ENCODE measurements at regions of chr15 and their contacts with region 1.

Region 1: DNA sequence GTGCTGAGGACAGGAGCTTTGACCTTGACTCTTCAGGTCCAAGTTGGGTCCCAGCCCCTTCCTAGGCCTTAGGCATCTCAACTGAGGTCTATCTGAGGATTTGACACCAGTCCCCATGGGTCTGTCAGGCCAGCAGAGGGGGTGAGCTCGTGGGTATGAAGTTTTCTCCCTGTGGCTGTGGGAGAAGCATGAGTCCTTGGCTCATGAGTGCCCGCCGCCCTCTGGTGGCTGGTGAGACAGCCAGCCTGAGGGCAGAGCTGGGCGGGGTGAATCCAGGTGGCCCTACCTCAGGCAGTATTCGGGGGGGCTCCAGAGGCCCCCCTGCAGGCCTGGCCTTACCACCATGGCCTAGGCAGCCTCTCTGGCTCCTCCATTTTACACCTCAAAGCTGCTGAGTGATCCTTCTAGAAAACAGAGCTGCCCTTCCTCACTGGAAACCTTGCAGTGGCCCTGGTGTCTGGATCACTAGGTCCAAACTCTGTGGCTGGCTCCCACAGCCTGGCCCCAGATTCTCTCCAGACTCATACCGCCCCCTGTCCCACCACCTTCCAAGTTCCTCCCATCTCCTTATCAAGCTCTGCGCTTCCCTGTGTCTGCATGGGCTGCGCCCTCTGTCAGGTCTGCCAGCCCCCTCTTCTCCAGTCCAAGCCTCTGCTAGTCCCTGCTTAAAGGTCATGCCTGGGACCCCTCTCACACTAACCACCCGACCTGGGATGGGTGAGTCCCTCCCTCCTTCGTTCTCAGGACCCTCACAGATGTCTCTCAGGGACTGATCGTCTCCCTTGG is 16.1 kb downstream of the SH2D7 start:
- DNase-seq: peak; percentile 77 to 93
- ATAC-seq: peak; percentile 72 to 81 (median 76)
- H3K4me3 ChIP-seq: no peak overlapping the region
- H3K4me3 Mint-ChIP-seq: no peak overlapping the region
- H3K27ac ChIP-seq: no peak overlapping the region
- H3K27ac Mint-ChIP-seq: no peak overlapping the region
- H3K4me1 ChIP-seq: peaks cover 55% of the 10 kb centered on the region
- H3K4me1 Mint-ChIP-seq: peaks cover 39 to 42% of the 10 kb centered on the region in 2 donors
- H3K27me3 ChIP-seq: no peaks in the 10 kb centered on the region
- H3K27me3 Mint-ChIP-seq: no peaks in the 10 kb centered on the region
- CTCF ChIP-seq: peak; percentile 91

Region 2: DNA sequence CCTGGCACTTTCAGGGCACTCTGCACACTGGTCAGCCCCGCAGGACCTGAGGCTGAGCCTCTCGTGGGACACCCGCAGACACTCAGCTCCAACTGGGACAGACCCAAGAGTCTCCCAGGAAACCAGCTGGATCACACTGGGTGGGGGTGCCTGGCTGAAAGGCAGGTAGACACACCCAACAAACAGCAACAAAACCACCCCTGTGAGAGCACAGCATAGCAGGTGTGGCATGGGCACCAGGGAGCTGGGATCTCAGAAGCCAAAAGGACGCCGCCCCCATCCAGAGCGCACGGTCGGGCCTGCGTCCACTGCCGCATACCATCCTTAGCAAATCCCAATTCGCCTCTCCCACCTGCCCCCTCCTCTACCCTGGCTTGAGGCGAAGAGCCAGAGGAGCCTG is 321.5 kb before region 1 on chr15:
- intact Hi-C with region 1: no loop called
- DNase-seq: no peak
- ATAC-seq: no peak
- H3K4me3 ChIP-seq: no peak overlapping the region
- H3K4me3 Mint-ChIP-seq: no peak overlapping the region
- H3K27ac ChIP-seq: no peak overlapping the region
- H3K27ac Mint-ChIP-seq: no peak overlapping the region
- H3K4me1 ChIP-seq: no peaks in the 10 kb centered on the region
- H3K4me1 Mint-ChIP-seq: no peaks in the 10 kb centered on the region
- H3K27me3 ChIP-seq: no peaks in the 10 kb centered on the region
- H3K27me3 Mint-ChIP-seq: peaks cover 8 to 11% of the 10 kb centered on the region in 2 donors
- CTCF ChIP-seq: no peak

Region 3: GRCh38 chr15:77966540-77967290 is 141.8 kb before region 1 on chr15:
- intact Hi-C with region 1: loop called (anchors 1 kb)
- DNase-seq: peak in 1 of 2 donors; percentile 74
- ATAC-seq: peak; percentile 63 to 82 (median 72)
- H3K4me3 ChIP-seq: no peak overlapping the region
- H3K4me3 Mint-ChIP-seq: no peak overlapping the region
- H3K27ac ChIP-seq: no peak overlapping the region
- H3K27ac Mint-ChIP-seq: no peak overlapping the region
- H3K4me1 ChIP-seq: no peaks in the 10 kb centered on the region
- H3K4me1 Mint-ChIP-seq: peaks cover 0 to 5% of the 10 kb centered on the region in 2 donors
- H3K27me3 ChIP-seq: no peaks in the 10 kb centered on the region
- H3K27me3 Mint-ChIP-seq: peaks cover 14 to 54% of the 10 kb centered on the region in 2 donors
- CTCF ChIP-seq: peak; percentile 85

Region 4: DNA sequence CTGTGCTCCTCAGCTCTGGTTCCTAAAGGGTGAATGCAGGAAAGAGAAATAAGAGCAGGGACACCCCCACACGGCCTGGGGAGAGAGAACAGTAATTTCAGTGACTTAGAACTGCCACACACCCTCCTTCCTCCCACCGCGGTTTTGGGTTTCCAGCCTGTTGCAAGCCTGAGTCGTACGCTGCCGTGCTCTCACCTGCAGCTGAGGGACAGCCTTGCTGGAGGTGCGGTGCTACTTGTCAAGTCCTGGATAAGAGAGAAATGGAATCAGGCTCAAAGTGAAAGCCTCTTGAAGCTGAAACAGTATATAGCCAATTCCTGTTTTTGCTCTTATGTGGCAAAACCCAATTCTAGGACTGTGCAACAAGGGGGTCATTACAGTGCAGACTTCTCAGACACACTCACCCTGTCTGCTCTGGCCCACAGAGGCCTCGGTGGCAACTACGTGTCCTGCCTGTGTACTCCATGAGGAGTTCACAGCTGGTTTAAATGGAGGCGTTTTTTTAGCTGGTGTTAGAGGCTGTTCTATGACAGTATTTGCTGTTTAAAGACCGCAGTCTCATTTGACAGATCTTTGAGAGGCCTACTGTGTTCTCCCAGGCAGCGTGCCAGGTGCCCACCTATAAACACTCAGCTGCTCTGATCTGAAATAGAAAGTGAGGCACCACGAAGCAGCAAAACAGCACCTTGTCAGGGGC is 73.8 kb before region 1 on chr15:
- intact Hi-C with region 1: loop called (anchors 1 kb)
- DNase-seq: peak; percentile 52 to 90
- ATAC-seq: peak; percentile 75 to 82 (median 81)
- H3K4me3 ChIP-seq: no peak overlapping the region
- H3K4me3 Mint-ChIP-seq: peak overlapping the region; percentile 79
- H3K27ac ChIP-seq: peak overlapping the region; percentile 82
- H3K27ac Mint-ChIP-seq: peak overlapping the region; percentile 92 to 96
- H3K4me1 ChIP-seq: peaks cover 52% of the 10 kb centered on the region
- H3K4me1 Mint-ChIP-seq: peaks cover 47 to 71% of the 10 kb centered on the region in 2 donors
- H3K27me3 ChIP-seq: no peaks in the 10 kb centered on the region
- H3K27me3 Mint-ChIP-seq: no peaks in the 10 kb centered on the region
- CTCF ChIP-seq: no peak

Region 5: GRCh38 chr15:78195735-78196201 is 87.3 kb after region 1 on chr15:
- intact Hi-C with region 1: loop called (anchors 1 kb)
- DNase-seq: peak; percentile 37 to 76
- ATAC-seq: peak in 2 of 3 donors; percentile 80 to 81
- H3K4me3 ChIP-seq: no peak overlapping the region
- H3K4me3 Mint-ChIP-seq: no peak overlapping the region
- H3K27ac ChIP-seq: no peak overlapping the region
- H3K27ac Mint-ChIP-seq: no peak overlapping the region
- H3K4me1 ChIP-seq: no peaks in the 10 kb centered on the region
- H3K4me1 Mint-ChIP-seq: no peaks in the 10 kb centered on the region
- H3K27me3 ChIP-seq: no peaks in the 10 kb centered on the region
- H3K27me3 Mint-ChIP-seq: peaks cover 0 to 8% of the 10 kb centered on the region in 2 donors
- CTCF ChIP-seq: peak; percentile 68